Activated CD8-positive, alpha-beta T cell treated with anti-CD3 and anti-CD28 coated beads for 36 hours (primary cell): ENCODE measurements at regions of chr19 and their contacts with region 1.

Region 1: DNA sequence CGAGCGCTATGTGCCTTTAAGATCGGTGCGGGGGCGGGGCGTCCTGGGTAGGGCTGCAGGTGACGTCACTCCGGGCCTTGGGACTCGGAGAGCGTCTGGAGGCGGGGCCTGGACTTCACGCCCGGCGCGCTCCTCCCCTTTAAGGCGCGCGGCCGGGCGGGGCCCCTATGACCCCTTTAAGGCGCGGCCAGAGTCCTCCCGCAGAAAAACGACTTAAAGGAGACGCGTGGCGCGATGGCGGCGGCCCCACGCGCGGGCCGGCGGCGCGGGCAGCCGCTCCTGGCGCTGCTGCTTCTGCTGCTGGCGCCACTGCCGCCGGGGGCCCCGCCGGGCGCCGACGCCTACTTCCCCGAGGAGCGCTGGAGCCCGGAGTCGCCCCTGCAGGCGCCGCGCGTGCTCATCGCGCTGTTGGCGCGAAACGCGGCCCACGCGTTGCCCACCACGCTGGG is at the start of gene COLGALT1:
- DNase-seq: peak; percentile 100
- ATAC-seq: peak; percentile 99
- H3K4me3 Mint-ChIP-seq: peak within 1 kb of the TSS; percentile 87
- H3K27ac Mint-ChIP-seq: peak within 1 kb of the TSS; percentile 79
- H3K4me1 Mint-ChIP-seq: peaks cover 10% of the 10 kb centered on the region
- H3K27me3 Mint-ChIP-seq: no peaks in the 10 kb centered on the region
- CTCF ChIP-seq: no peak
- total RNA-seq, gene COLGALT1: 62.1 to 64.2 TPM

Region 2: GRCh38 chr19:17511724-17512573 is 43.6 kb before region 1 on chr19:
- CTCF ChIA-PET with region 1: no interaction called
- POLR2A ChIA-PET with region 1: interaction called, 8 read pairs
- intact Hi-C with region 1: loop called (anchors 1 kb)
- DNase-seq: peak; percentile 96
- ATAC-seq: peak; percentile 76
- H3K4me3 Mint-ChIP-seq: peak overlapping the region; percentile 87
- H3K27ac Mint-ChIP-seq: peak overlapping the region; percentile 94
- H3K4me1 Mint-ChIP-seq: peaks cover 28% of the 10 kb centered on the region
- H3K27me3 Mint-ChIP-seq: no peaks in the 10 kb centered on the region
- CTCF ChIP-seq: no peak

Region 3: GRCh38 chr19:17570791-17571190 is 15.3 kb after region 1 on chr19:
- CTCF ChIA-PET with region 1: interaction called, 21 read pairs
- POLR2A ChIA-PET with region 1: interaction called, 8 read pairs
- intact Hi-C with region 1: no loop called
- DNase-seq: no peak
- ATAC-seq: no peak
- H3K4me3 Mint-ChIP-seq: no peak overlapping the region
- H3K27ac Mint-ChIP-seq: no peak overlapping the region
- H3K4me1 Mint-ChIP-seq: peaks cover 2% of the 10 kb centered on the region
- H3K27me3 Mint-ChIP-seq: no peaks in the 10 kb centered on the region
- CTCF ChIP-seq: no peak